ENCODE measurements at regions of chr12 and their contacts with region 1.

Region 1: DNA sequence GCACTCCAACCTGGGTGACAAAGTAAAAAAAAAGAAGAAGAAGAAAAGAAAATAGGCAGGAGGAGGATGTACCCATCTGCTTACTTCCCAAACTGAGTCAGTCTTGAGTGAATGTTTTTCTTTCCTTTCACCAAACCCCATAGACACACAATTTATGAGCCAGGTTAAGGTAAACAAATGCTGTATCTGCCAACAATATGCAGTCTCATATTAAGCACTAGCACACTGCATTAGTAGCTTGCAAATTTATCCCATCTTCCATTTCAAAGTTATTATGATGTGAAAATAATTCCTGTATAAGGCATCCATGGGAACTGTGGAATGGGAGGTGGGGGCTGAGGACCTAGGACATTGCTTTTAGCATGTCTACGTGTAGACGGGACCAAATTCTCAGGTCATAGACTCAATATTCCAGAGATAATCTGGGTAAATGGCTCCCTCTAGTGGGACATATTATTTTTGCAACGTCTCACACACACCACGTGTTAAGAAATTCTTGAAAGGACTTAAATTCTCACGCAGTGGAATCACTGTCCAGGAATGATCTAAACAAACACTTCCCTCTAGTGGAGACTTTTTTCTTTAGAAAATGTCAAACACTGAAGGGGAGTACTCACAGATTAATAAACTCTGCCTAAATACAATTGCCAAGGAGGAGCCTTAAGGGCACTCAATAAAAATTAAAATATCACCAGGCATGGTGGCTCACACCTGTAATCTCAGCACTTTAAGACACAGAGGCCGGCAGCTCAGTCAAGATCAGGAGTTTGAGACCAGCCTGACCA is 17.1 kb upstream of the OR10P1 start:
- DNase-seq: no peak
- ATAC-seq: peak; percentile 82 to 92 (median 86)
- H3K4me3 ChIP-seq: no peak overlapping the region
- H3K27ac ChIP-seq: no peak overlapping the region
- H3K4me1 ChIP-seq: no peaks in the 10 kb centered on the region
- H3K27me3 ChIP-seq: peaks cover 0 to 2% (median 2%) of the 10 kb centered on the region in 3 donors
- CTCF ChIP-seq: peak; percentile 66

Region 2: GRCh38 chr12:55188974-55189556 is 430.5 kb before region 1 on chr12:
- intact Hi-C with region 1: loop called (anchors 2 to 5 kb)
- DNase-seq: no peak
- ATAC-seq: peak in 3 of 4 donors; percentile 63 to 76 (median 76)
- H3K4me3 ChIP-seq: no peak overlapping the region
- H3K27ac ChIP-seq: no peak overlapping the region
- H3K4me1 ChIP-seq: no peaks in the 10 kb centered on the region
- H3K27me3 ChIP-seq: no peaks in the 10 kb centered on the region
- CTCF ChIP-seq: peak; percentile 79

Region 3: DNA sequence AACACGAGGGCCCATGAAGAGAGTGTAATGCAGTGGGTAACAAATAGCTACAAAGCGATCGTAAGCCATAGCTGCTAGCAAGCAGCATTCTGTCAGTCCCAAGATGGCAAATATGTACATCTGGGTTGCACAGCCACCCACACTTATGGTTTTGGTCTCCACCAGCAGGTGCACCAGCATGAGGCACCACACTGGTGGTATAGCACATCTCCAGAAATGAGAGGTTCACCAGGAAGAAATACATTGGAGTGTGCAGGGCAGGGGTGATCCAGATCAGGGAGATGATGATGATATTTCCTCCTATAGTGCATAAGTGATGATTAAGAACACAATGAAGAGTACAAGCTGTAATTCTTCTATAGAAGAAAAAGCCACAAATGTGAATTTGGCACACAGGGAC is 425.2 kb before region 1 on chr12:
- intact Hi-C with region 1: loop called (anchors 2 to 5 kb)
- DNase-seq: no peak
- ATAC-seq: no peak
- H3K4me3 ChIP-seq: no peak overlapping the region
- H3K27ac ChIP-seq: no peak overlapping the region
- H3K4me1 ChIP-seq: no peaks in the 10 kb centered on the region
- H3K27me3 ChIP-seq: peaks cover 0 to 9% (median 0%) of the 10 kb centered on the region in 3 donors
- CTCF ChIP-seq: no peak

Region 4: GRCh38 chr12:55582066-55582465 is 37.5 kb before region 1 on chr12:
- intact Hi-C with region 1: no loop called
- DNase-seq: no peak
- ATAC-seq: no peak
- H3K4me3 ChIP-seq: no peak overlapping the region
- H3K27ac ChIP-seq: no peak overlapping the region
- H3K4me1 ChIP-seq: no peaks in the 10 kb centered on the region
- H3K27me3 ChIP-seq: no peaks in the 10 kb centered on the region
- CTCF ChIP-seq: no peak

Measured in psoas muscle (tissue), 8 donors.